Posterior cingulate gyrus (tissue), 11 donors: ENCODE measurements at regions of chr7 and their contacts with region 1.

Region 1: GRCh38 chr7:33050535-33051318 is 11.8 kb downstream of the NT5C3A start:
- DNase-seq: no peak

Region 2: GRCh38 chr7:32694182-32694581 is 356.5 kb before region 1 on chr7:
- intact Hi-C with region 1: loop called (anchors 5 kb)
- DNase-seq: no peak

Region 3: DNA sequence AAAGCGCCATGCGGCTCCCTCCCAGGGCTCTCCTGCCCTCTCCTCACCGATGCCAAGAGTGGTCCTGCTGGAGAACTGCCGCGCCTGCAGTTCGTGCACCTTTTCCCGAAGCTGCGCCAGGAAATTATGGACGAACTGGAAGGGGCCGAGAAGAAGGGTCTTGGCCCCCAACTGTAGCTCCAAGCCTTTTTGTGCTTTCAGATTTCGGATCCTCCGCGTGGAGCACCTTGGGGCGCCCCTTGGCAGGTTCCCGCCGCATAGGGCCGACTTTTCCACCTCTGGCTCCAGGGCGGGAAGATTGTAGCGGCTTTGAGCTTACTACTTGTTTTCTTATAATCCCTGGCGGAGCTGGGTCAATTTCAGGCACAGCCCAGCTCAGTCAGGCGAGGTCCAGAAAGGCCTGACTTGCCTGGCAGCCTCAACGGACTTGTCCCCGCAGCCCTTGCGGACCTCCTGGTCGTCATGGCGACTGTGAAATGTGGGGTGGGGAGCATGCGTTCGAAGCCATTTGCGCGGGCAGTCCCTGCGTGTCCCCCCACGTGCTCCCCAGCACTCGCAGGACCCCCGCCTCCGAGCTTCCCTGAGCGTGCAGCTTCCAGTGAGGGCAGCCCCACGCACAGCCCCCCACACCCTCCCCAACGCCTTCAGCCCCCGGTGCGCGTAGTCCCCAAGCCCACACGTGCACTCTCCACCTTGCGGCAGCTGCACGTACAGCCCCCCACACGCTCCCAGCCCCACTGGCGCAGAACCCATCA is 289.1 kb before region 1 on chr7:
- intact Hi-C with region 1: loop called (anchors 10 kb)
- DNase-seq: peak in 5 of 10 donors; percentile 11 to 89 (median 80)